ENCODE measurements at regions of chr2 and their contacts with region 1.

Region 1: DNA sequence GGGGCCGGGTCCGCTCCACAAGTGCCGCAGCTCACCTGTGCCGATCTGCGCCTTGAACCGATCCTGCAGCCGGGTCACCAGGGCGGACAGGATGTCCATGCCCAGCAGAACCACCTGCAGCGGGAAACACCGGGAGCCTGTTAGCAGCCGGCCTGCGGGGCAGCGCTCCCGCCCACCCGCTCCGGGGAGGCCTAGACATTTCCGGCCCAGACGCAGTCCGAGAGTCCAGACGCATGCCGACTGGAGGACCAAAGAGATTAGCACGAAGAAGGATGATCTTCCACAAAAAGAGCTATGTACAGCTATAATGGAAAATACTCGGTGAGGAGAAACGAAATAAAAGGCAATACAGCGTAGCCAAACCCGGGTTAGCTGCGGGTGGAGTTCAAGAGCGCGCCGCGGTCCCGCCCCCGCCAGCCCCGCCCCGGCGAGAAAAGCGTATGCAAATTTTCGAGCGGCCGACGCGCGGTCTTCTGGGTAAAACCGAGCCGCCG is 421 bp upstream of the RNU4ATAC start:
- DNase-seq: peak in 8 of 9 experiments; percentile 72 to 89 (median 86)
- ATAC-seq: peak; percentile 75
- H3K4me3 ChIP-seq: peak overlapping the region; percentile 78 to 97
- H3K4me3 Mint-ChIP-seq: peak overlapping the region; percentile 96
- H3K27ac ChIP-seq: peak overlapping the region; percentile 100
- H3K27ac Mint-ChIP-seq: peak overlapping the region; percentile 100
- H3K4me1 ChIP-seq: peaks cover 17% of the 10 kb centered on the region
- H3K4me1 Mint-ChIP-seq: peaks cover 44% of the 10 kb centered on the region
- H3K27me3 ChIP-seq: no peaks in the 10 kb centered on the region
- H3K27me3 Mint-ChIP-seq: no peaks in the 10 kb centered on the region
- CTCF ChIP-seq: no peak

Region 2: DNA sequence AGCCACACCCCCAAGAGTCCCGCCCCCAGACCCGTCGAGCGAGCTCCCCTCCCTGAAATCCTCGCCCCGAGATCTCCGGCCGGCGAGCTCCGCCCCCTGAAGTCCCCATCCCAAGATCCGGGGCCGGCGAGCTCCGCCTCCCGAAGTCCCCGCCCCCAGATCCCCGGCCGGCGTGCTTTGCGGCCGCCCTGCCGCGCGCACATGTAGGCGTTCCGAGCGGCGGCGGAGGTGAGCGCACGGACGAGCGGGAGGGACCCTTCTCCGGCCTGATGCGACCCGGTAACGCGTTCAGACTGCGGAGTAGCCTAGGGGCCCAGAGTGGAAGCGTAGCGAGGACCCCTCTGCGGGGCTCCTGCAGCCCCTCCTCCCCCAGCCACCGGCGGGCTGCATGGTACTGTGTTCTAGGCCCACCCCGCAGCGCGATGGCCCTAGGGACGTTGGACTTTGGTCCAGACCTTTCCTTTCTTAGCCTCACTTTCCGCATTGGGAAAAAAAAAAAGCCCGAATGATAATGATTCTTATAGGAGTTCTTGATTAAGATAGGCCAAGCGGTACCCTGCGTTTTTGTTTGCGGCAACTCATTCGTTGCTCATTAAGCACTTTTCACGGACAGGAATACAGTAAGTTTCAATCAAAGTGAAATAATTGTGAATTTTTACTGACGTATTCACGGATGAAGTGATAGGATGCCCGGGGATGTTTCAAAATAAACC is 1851.1 kb before region 1 on chr2 and contains the start of gene TMEM177:
- CTCF ChIA-PET with region 1: no interaction called
- POLR2A ChIA-PET with region 1: no interaction called
- intact Hi-C with region 1: loop called (anchors 10 kb)
- DNase-seq: peak; percentile 77 to 93 (median 87)
- ATAC-seq: peak; percentile 86
- H3K4me3 ChIP-seq: peak within 1 kb of the TSS; percentile 71 to 90
- H3K4me3 Mint-ChIP-seq: peak within 1 kb of the TSS; percentile 89
- H3K27ac ChIP-seq: peak within 1 kb of the TSS; percentile 59 to 69
- H3K27ac Mint-ChIP-seq: peak within 1 kb of the TSS; percentile 92
- H3K4me1 ChIP-seq: peaks cover 18% of the 10 kb centered on the region
- H3K4me1 Mint-ChIP-seq: peaks cover 27% of the 10 kb centered on the region
- H3K27me3 ChIP-seq: no peaks in the 10 kb centered on the region
- H3K27me3 Mint-ChIP-seq: no peaks in the 10 kb centered on the region
- CTCF ChIP-seq: no peak
- total RNA-seq, gene TMEM177: 2.1 to 3.8 TPM

Region 3: DNA sequence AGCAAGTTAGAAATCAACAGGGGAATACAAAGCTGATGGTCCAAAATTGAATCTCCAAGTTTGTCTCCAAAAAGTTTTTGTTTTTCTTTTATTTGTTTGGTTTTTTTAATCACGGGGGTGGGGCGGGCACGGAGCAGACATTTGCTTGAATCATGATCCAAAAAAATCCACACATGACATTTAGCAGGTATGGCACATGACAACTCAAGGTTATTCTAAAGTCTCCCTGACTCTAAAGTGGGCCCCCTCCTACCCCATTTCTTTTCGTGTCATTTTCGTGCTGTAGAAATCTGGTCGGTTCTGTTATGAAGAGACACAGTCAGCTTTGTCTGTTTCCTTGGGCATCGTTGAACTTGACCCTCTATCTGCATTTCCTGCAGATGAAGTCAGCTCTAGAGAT is 15.0 kb after region 1 on chr2:
- CTCF ChIA-PET with region 1: interaction called, 4 read pairs
- POLR2A ChIA-PET with region 1: interaction called, 13 read pairs
- intact Hi-C with region 1: no loop called
- DNase-seq: no peak
- ATAC-seq: no peak
- H3K4me3 ChIP-seq: no peak overlapping the region
- H3K4me3 Mint-ChIP-seq: no peak overlapping the region
- H3K27ac ChIP-seq: no peak overlapping the region
- H3K27ac Mint-ChIP-seq: no peak overlapping the region
- H3K4me1 ChIP-seq: peaks cover 7% of the 10 kb centered on the region
- H3K4me1 Mint-ChIP-seq: peaks cover 45% of the 10 kb centered on the region
- H3K27me3 ChIP-seq: no peaks in the 10 kb centered on the region
- H3K27me3 Mint-ChIP-seq: no peaks in the 10 kb centered on the region
- CTCF ChIP-seq: no peak

Region 4: GRCh38 chr2:121649596-121650314 is 119.5 kb after region 1 on chr2:
- CTCF ChIA-PET with region 1: interaction called, 11 read pairs
- POLR2A ChIA-PET with region 1: interaction called, 77 read pairs
- intact Hi-C with region 1: loop called (anchors 1 kb)
- DNase-seq: peak; percentile 90 to 99 (median 95)
- ATAC-seq: peak; percentile 94
- H3K4me3 ChIP-seq: peak overlapping the region; percentile 84 to 95
- H3K4me3 Mint-ChIP-seq: peak overlapping the region; percentile 97
- H3K27ac ChIP-seq: peak overlapping the region; percentile 87 to 92
- H3K27ac Mint-ChIP-seq: peak overlapping the region; percentile 99
- H3K4me1 ChIP-seq: peaks cover 28% of the 10 kb centered on the region
- H3K4me1 Mint-ChIP-seq: peaks cover 69% of the 10 kb centered on the region
- H3K27me3 ChIP-seq: no peaks in the 10 kb centered on the region
- H3K27me3 Mint-ChIP-seq: no peaks in the 10 kb centered on the region
- CTCF ChIP-seq: no peak

Region 5: GRCh38 chr2:121722479-121722878 is 192.2 kb after region 1 on chr2:
- CTCF ChIA-PET with region 1: interaction called, 7 read pairs
- POLR2A ChIA-PET with region 1: interaction called, 16 read pairs
- intact Hi-C with region 1: loop called (anchors 1 kb)
- DNase-seq: no peak
- ATAC-seq: no peak
- H3K4me3 ChIP-seq: no peak overlapping the region
- H3K4me3 Mint-ChIP-seq: no peak overlapping the region
- H3K27ac ChIP-seq: no peak overlapping the region
- H3K27ac Mint-ChIP-seq: no peak overlapping the region
- H3K4me1 ChIP-seq: no peaks in the 10 kb centered on the region
- H3K4me1 Mint-ChIP-seq: peaks cover 3% of the 10 kb centered on the region
- H3K27me3 ChIP-seq: no peaks in the 10 kb centered on the region
- H3K27me3 Mint-ChIP-seq: no peaks in the 10 kb centered on the region
- CTCF ChIP-seq: no peak

Region 6: DNA sequence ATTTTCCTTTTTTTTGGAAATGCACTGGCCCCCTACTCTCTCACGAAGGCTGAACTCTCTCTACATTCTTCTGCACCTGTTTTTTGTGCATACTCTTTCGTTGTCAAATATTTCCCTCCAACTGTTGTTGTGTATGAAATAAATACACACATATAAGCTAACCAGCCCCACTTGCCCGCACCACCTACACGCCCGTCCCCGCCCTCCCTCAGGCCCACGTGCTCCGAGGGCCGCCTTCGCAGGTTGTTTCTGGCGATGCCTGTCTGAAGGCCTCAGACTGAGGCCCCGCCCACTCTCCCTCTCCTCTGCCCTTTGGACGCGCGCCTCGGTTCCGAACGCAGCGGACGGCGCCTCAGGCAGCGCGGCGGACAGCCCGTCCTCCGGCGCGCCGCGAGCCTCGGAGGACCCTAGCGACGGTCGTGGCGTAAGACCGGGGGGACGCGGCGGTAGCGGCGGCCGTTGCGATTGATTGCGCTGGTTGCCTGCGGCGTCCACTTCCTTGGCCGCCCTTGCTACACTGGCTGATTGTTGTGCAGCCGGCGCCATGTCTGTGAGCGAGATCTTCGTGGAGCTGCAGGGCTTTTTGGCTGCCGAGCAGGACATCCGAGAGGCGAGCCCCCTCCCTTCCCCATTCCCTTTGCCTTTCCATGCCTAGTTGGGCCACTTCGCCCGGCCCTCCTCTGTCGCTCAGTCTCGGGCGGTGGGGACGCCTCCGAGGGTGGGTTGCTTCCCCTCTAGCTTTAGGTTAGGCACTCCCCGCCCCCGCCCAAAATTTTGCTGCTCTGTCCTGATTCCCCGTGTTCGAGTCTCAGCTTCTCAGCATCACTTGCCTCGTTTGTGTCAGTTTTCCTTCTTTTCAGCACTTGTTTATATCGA is 225.2 kb after region 1 on chr2 and contains the start of gene TSN:
- CTCF ChIA-PET with region 1: interaction called, 4 read pairs
- POLR2A ChIA-PET with region 1: interaction called, 3 read pairs
- intact Hi-C with region 1: loop called (anchors 1 kb)
- DNase-seq: peak; percentile 95 to 99 (median 98)
- ATAC-seq: peak; percentile 99
- H3K4me3 ChIP-seq: peak within 1 kb of the TSS; percentile 81 to 98
- H3K4me3 Mint-ChIP-seq: peak within 1 kb of the TSS; percentile 95
- H3K27ac ChIP-seq: peak within 1 kb of the TSS; percentile 65 to 85
- H3K27ac Mint-ChIP-seq: peak within 1 kb of the TSS; percentile 92
- H3K4me1 ChIP-seq: peaks cover 20% of the 10 kb centered on the region
- H3K4me1 Mint-ChIP-seq: peaks cover 27% of the 10 kb centered on the region
- H3K27me3 ChIP-seq: no peaks in the 10 kb centered on the region
- H3K27me3 Mint-ChIP-seq: no peaks in the 10 kb centered on the region
- CTCF ChIP-seq: no peak
- total RNA-seq, gene TSN: 66.8 to 75.2 TPM

Measured in CD8-positive, alpha-beta T cell (primary cell).